Heart left ventricle (tissue), 16 donors: ENCODE measurements at regions of chr6 and their contacts with region 1.

Region 1: GRCh38 chr6:110528101-110528929 is 51.9 kb upstream of the SLC22A16 start:
- DNase-seq: peak in 4 of 5 donors; percentile 38 to 45 (median 41)
- ATAC-seq: peak; percentile 57 to 83 (median 79)
- H3K4me3 ChIP-seq: no peak overlapping the region
- H3K27ac ChIP-seq: peak overlapping the region in 6 of 12 donors; percentile 0 to 42 (median 26)
- H3K4me1 ChIP-seq: peaks cover 0 to 20% (median 5%) of the 10 kb centered on the region in 12 donors
- H3K27me3 ChIP-seq: no peaks in the 10 kb centered on the region
- CTCF ChIP-seq: peak; percentile 61 to 83 (median 78)
- POLR2A ChIP-seq: no peak

Region 2: DNA sequence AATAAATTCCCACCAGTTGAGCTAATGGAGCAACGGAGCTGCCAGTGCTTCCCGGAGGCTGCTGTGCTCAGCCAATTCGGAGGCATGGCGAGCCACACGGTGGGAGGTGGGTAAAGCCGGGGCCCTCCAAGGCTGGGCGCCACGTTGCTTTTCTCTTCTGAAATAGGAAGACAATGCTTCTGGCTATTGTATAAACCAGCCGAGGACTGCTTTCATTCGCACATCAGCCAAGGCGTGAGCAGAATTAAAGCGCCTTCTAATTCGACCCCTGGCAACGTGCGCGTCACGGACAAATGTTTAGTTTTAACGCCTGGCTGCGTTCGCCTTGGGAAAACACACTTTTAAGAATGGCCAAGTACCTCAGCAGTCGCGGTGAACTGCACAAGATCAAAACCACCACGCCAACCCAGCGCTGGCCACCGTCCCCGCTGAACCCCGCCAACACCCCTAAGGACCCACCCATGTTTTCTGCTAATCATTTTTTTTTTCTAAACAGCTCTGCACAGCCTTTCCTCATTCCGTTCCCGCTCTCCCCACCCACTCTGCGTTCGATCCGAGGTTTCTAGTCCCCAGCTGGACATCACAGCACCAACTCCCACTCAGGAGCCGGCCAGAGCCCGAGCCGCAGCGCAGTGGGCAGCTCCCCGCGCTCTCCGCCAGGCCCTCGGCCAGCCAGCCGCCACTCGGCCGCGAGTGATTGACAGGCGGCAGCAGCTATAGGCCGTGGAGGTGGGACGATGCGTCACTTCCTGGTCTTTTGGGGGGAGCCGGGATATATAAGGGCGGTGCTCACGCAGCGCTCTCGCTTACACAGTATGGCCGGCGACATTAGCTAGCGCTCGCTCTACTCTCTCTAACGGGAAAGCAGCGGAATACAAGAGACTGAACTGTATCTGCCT is 345.9 kb after region 1 on chr6 and contains the start of gene AMD1:
- intact Hi-C with region 1: loop called in 3 of 10 experiments (anchors 5 to 10 kb)
- DNase-seq: peak; percentile 98 to 99 (median 98)
- ATAC-seq: peak; percentile 92 to 95 (median 94)
- H3K4me3 ChIP-seq: peak within 1 kb of the TSS; percentile 74 to 95 (median 90)
- H3K27ac ChIP-seq: peak within 1 kb of the TSS; percentile 74 to 98 (median 94)
- H3K4me1 ChIP-seq: peaks cover 2 to 36% (median 29%) of the 10 kb centered on the region in 12 donors
- H3K27me3 ChIP-seq: no peaks in the 10 kb centered on the region
- CTCF ChIP-seq: no peak
- POLR2A ChIP-seq: peak; percentile 93 to 98
- total RNA-seq, gene AMD1: 44.5 to 85.6 (median 70.4) TPM

Region 3: GRCh38 chr6:110944681-110945151 is 416.4 kb after region 1 on chr6:
- intact Hi-C with region 1: loop called in 8 of 10 experiments (anchors 2 to 5 kb)
- DNase-seq: no peak
- ATAC-seq: peak in 2 of 4 donors; percentile 49 to 55
- H3K4me3 ChIP-seq: no peak overlapping the region
- H3K27ac ChIP-seq: no peak overlapping the region
- H3K4me1 ChIP-seq: peaks cover 0 to 18% (median 0%) of the 10 kb centered on the region in 12 donors
- H3K27me3 ChIP-seq: no peaks in the 10 kb centered on the region
- CTCF ChIP-seq: no peak
- POLR2A ChIP-seq: no peak

Region 4: DNA sequence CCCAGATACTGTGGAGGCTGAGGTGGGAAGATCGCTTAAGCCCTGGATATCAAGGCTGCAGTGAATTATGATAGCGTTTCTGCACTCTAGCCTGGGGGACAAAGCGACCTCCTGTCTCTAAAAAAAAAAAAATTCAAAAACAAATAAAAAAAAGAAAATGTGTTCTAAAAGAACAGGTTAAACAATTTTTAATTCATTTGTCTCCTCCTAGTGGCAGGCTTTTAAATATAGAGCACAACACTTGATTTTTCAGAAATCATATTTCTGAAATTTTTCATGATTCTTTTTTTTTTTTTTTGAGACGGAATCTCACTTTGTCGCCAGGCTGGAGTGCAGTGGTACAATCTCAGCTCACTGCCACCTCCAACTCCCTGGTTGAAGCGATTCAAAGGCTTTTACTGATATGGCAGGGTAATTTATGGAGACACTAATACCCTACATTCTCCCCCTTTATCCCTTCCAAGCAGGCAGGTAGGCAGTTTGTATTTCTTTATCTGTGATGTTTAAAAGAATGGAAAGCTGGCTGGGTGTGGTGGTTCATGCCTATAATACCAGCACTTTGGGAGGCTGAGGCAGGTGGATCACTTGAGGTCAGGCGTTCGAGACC is 421.5 kb after region 1 on chr6:
- intact Hi-C with region 1: loop called (anchors 2 to 5 kb)
- DNase-seq: no peak
- ATAC-seq: no peak
- H3K4me3 ChIP-seq: no peak overlapping the region
- H3K27ac ChIP-seq: no peak overlapping the region
- H3K4me1 ChIP-seq: peaks cover 0 to 13% (median 0%) of the 10 kb centered on the region in 12 donors
- H3K27me3 ChIP-seq: no peaks in the 10 kb centered on the region
- CTCF ChIP-seq: peak; percentile 36 to 67 (median 53)
- POLR2A ChIP-seq: no peak

Region 5: GRCh38 chr6:110981202-110981600 is 452.9 kb after region 1 on chr6:
- intact Hi-C with region 1: loop called in 1 of 10 experiments (anchors 10 kb)
- DNase-seq: no peak
- ATAC-seq: peak in 2 of 4 donors; percentile 2 to 4
- H3K4me3 ChIP-seq: peak overlapping the region; percentile 49 to 89 (median 78)
- H3K27ac ChIP-seq: peak overlapping the region; percentile 45 to 97 (median 90)
- H3K4me1 ChIP-seq: peaks cover 0 to 21% (median 11%) of the 10 kb centered on the region in 12 donors
- H3K27me3 ChIP-seq: no peaks in the 10 kb centered on the region
- CTCF ChIP-seq: no peak
- POLR2A ChIP-seq: no peak

Region 6: DNA sequence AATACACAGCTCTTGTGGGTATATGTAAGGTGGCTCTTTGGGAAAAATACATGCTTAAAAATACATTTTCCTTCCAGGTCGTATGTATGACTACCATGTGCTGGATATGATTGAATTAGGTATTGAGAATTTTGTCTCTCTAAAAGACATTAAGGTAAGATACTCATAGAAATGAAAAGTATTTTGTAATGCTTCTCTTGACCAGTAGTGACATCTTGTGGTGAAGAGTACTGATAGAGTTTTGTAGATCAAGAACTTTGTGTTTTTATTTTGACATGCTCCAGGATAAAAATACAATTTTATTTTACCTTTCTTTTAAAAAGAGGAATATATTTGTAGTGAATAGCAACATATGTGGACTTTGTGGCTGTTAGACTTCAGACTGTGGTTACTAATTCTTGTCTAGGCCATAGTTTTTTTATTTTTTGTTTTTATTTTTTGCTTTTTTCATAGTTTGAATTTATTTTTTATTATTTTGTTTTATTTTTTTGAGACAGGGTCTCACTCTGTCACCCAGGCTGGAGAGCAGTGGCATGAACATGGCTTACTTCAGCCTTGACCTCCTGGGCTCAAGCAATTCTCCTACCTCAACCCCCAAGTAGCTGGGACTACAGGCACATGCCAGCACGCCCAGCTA is 471.4 kb after region 1 on chr6:
- intact Hi-C with region 1: loop called in 9 of 10 experiments (anchors 2 to 10 kb)
- DNase-seq: no peak
- ATAC-seq: no peak
- H3K4me3 ChIP-seq: no peak overlapping the region
- H3K27ac ChIP-seq: no peak overlapping the region
- H3K4me1 ChIP-seq: no peaks in the 10 kb centered on the region
- H3K27me3 ChIP-seq: no peaks in the 10 kb centered on the region
- CTCF ChIP-seq: peak in 11 of 12 donors; percentile 15 to 58 (median 45)
- POLR2A ChIP-seq: no peak

Region 7: GRCh38 chr6:111210194-111210728 is 681.9 kb after region 1 on chr6:
- intact Hi-C with region 1: loop called in 4 of 10 experiments (anchors 5 to 10 kb)
- DNase-seq: no peak
- ATAC-seq: peak in 3 of 4 donors; percentile 53 to 72 (median 61)
- H3K4me3 ChIP-seq: no peak overlapping the region
- H3K27ac ChIP-seq: no peak overlapping the region
- H3K4me1 ChIP-seq: peaks cover 0 to 5% (median 0%) of the 10 kb centered on the region in 12 donors
- H3K27me3 ChIP-seq: no peaks in the 10 kb centered on the region
- CTCF ChIP-seq: peak; percentile 58 to 81 (median 72)
- POLR2A ChIP-seq: no peak